A549 (cell line): ENCODE measurements at regions of chr11 and their contacts with region 1.

Region 1: DNA sequence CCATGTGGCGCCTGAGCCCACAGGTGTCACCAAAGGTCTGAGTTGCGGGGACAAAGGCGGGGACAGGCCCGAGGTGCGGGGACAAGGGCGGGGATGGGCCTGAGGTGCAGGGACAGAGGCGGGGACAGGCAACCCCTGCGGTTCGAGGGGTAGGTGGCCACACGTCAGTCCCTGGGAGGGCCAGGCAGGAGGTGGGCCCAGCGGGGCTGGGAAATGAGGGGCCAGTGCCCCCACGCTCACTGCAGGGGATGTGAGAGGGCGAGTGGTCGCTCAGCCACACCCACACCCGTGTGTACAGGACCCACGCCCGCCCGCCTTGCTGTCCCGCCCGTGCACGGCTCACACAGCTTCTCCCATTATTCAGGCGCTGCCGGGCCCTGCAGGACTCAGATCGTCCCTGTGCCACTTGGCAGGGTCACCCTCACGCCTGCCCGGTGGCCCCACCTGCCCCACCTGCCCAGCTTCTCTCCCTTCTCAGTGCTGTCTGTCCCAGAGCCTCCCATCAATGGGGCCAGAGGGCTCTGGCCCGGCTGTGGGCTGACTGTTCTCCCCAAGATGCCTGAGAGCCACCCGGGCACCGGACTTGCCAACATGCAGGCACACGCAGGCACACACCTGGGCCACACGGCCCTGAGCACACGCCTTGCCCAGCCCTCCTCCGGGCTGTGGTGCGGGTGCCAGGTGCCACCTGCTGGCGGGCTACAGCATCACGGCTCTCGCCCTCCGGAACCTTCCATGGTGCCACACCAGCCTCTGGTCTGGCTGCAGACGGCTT is 14.2 kb upstream of the MUC6 start:
- DNase-seq: peak; percentile 79 to 93
- ATAC-seq: peak; percentile 86 to 96
- H3K4me3 ChIP-seq: no peak overlapping the region
- H3K27ac ChIP-seq: peak overlapping the region; percentile 30 to 81; a peak in 5 of 6 replicates
- H3K4me1 ChIP-seq: peaks cover 42% of the 10 kb centered on the region
- CTCF ChIP-seq: peak; percentile 94
- EP300 ChIP-seq: no peak
- POLR2A ChIP-seq: no peak
- RAD21 ChIP-seq: peak; percentile 97 to 98

Region 2: GRCh38 chr11:848380-848931 is 202.3 kb before region 1 on chr11:
- CTCF ChIA-PET with region 1: interaction called, 40 read pairs
- POLR2A ChIA-PET with region 1: no interaction called
- DNase-seq: peak in 1 of 2 experiments; percentile 72
- ATAC-seq: peak in 1 of 2 experiments; percentile 9; a peak in 2 of 6 replicates
- H3K4me3 ChIP-seq: no peak overlapping the region
- H3K27ac ChIP-seq: peak overlapping the region; percentile 37 to 99; a peak in 3 of 6 replicates
- H3K4me1 ChIP-seq: peaks cover 67% of the 10 kb centered on the region
- CTCF ChIP-seq: peak; percentile 64
- EP300 ChIP-seq: no peak
- POLR2A ChIP-seq: no peak
- RAD21 ChIP-seq: peak; percentile 72 to 78

Region 3: GRCh38 chr11:870127-870413 is 180.7 kb before region 1 on chr11:
- CTCF ChIA-PET with region 1: interaction called, 25 read pairs
- POLR2A ChIA-PET with region 1: no interaction called
- DNase-seq: no peak
- ATAC-seq: peak; percentile 35 to 48; a peak in 5 of 6 replicates
- H3K4me3 ChIP-seq: no peak overlapping the region
- H3K27ac ChIP-seq: no peak overlapping the region
- H3K4me1 ChIP-seq: peaks cover 24% of the 10 kb centered on the region; the same call in 2 of the 3 replicates
- CTCF ChIP-seq: no peak; the same call in 1 of the 3 replicates
- EP300 ChIP-seq: no peak
- POLR2A ChIP-seq: no peak
- RAD21 ChIP-seq: no peak

Region 4: GRCh38 chr11:888310-889212 is 162.2 kb before region 1 on chr11:
- CTCF ChIA-PET with region 1: interaction called, 11 read pairs
- POLR2A ChIA-PET with region 1: no interaction called
- DNase-seq: no peak
- ATAC-seq: no peak
- H3K4me3 ChIP-seq: no peak overlapping the region
- H3K27ac ChIP-seq: no peak overlapping the region
- H3K4me1 ChIP-seq: no peaks in the 10 kb centered on the region
- CTCF ChIP-seq: no peak
- EP300 ChIP-seq: no peak
- POLR2A ChIP-seq: no peak
- RAD21 ChIP-seq: no peak

Region 5: DNA sequence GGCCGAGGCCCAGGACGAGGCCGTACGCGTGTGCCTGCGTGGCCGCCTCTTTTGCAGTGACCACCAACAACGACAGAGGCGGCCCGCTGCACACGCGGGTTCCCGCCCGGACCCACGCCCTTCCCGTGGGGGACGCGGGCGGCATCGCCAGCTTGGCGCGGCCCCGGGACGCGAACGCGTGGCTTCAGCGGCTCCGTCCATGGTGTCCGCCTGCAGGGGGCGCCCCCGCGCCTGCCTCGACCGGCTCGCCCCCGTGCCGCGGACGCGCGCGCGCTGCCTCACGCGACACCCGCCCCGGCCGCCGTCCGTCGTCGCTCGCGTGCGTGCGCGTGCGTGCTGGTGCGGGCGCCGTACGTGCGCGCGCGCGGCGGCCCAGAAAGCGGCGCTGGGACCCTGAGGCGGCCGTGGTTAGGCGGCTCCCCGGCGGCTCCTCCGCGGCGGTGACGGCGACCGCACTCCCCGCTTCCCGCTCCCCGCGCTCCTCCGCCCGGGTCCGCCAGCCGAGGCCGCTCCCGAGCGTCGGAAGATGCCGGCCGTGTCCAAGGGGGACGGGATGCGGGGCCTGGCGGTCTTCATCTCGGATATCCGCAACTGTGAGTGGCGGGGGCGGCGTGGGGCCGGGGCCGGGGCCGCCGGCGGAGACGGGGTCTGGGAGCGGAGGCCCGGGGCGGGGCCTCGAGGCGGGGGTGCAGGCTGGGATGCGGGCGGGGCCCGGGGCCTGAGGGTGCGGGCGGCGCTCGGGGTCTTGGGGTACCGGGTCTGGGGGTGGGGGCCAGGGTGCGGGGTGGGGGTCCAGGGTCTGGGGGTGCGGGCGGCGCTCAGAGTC is 125.1 kb before region 1 on chr11 and contains the start of gene AP2A2:
- CTCF ChIA-PET with region 1: interaction called, 19 read pairs
- POLR2A ChIA-PET with region 1: no interaction called
- DNase-seq: peak; percentile 84 to 90
- ATAC-seq: peak; percentile 67 to 81
- H3K4me3 ChIP-seq: peak within 1 kb of the TSS; percentile 96
- H3K27ac ChIP-seq: peak within 1 kb of the TSS; percentile 98 to 99
- H3K4me1 ChIP-seq: peaks cover 13% of the 10 kb centered on the region
- CTCF ChIP-seq: peak; percentile 97
- EP300 ChIP-seq: no peak
- POLR2A ChIP-seq: peak; percentile 84
- RAD21 ChIP-seq: peak in 1 of 2 experiments; percentile 76; a peak in 4 of 5 replicates
- polyA plus RNA-seq, gene AP2A2: 60.4 and 72.6 TPM in 2 replicates

Region 6: DNA sequence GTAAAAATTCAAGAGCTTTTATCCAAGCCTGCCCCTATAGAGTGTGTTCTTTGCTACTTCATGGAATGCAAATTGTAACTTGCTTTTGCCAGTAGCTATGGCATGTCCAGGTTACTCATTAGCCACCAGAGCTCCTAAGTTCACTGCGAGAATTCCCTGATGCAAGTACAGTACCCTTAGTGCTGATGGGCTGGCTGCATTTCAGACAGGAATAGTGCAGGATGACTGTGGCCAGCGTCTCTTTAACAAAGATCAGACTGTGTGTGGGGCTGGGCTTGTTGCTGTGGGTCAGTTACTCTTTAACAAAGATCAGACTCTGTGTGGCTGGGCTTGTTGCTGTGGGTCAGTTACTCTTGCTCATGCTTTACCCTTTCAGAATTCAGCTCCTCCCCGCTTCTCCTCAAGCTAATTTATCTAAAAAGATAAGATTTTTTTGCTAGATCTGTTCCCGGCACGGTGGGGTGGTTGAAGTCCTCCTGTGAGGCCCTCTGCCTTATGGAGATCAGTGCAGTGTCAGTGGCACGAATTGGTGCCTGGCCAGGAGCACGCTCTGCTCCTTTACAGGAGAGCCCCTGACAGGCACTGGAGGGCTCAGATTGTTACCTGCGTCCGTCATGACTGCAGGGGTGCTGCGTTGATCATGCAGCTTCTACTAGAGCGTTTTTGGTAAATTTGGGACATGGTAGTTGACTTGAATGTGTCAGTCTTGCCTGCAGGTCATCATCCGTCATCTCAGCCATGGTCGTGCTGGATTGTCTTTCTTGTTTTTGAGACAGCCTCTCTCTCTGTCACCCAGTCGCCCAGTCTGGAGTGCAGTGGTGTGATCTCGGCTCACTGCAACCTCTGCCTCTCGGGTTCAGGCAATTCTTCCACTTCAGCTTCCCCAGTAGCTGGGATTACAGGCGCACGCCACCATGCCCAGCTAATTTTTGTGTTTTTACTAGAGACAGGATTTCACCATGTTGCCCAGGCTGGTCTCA is 98.1 kb before region 1 on chr11:
- CTCF ChIA-PET with region 1: interaction called, 16 read pairs
- POLR2A ChIA-PET with region 1: no interaction called
- DNase-seq: peak; percentile 85 to 96
- ATAC-seq: peak; percentile 97 to 98
- H3K4me3 ChIP-seq: peak overlapping the region; percentile 8; the same call in 1 of the 3 replicates
- H3K27ac ChIP-seq: peak overlapping the region; percentile 77 to 93
- H3K4me1 ChIP-seq: peaks cover 54% of the 10 kb centered on the region
- CTCF ChIP-seq: no peak
- EP300 ChIP-seq: no peak; a peak in 1 of 5 replicates
- POLR2A ChIP-seq: no peak
- RAD21 ChIP-seq: 0 out of 5 replicates have a peak, but pooled peaks of 1 of the 2 experiments have one; percentile 18

Region 7: DNA sequence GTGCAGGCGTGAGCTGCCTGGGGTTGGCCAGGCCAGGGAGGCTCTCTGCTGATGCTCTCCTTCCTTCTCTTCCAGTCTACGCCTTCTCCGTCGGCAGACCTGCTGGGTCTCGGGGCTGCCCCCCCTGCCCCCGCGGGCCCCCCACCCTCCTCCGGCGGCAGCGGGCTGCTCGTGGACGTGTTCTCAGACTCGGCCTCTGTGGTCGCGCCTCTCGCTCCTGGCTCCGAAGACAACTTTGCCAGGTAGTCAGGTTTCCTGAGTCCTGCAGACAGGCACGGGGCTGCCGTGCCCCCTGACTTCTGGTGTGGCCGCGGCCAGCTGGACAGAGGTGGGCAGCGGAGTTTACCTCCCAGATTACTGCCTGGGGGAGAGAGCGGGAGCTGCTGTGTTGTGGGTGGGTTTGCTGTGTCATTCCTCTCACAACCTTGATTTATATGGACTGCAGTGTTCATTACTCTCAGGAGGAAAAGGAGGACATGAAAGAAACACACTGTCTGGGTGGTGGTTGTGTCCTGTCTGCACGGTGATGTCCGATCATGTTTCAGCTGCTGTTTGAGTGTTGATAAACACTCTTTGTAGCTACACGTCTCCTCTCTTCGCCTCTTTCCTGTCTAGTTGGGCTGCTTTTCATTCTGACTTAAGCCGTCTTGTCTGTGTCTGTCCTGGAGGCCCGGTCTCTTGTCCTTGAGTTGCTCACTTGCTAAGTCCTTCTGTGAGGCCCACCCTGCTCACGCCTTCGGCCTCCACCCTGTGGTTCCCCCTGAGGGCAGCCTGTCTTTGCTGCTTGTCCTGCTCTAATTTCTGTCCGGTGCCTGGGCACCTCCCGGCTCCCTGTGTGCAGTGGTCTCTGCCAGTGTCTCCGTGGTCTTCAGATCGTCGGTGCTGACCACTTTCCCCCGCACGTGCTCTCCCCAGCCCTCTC is 50.1 kb before region 1 on chr11:
- CTCF ChIA-PET with region 1: no interaction called
- POLR2A ChIA-PET with region 1: no interaction called
- DNase-seq: no peak
- ATAC-seq: no peak
- H3K4me3 ChIP-seq: no peak overlapping the region
- H3K27ac ChIP-seq: 0 out of 6 replicates have a peak overlapping the region, but pooled peaks of 1 of the 2 experiments have one; percentile 7
- H3K4me1 ChIP-seq: no peaks in the 10 kb centered on the region
- CTCF ChIP-seq: no peak
- EP300 ChIP-seq: no peak
- POLR2A ChIP-seq: no peak
- RAD21 ChIP-seq: no peak

Region 8: DNA sequence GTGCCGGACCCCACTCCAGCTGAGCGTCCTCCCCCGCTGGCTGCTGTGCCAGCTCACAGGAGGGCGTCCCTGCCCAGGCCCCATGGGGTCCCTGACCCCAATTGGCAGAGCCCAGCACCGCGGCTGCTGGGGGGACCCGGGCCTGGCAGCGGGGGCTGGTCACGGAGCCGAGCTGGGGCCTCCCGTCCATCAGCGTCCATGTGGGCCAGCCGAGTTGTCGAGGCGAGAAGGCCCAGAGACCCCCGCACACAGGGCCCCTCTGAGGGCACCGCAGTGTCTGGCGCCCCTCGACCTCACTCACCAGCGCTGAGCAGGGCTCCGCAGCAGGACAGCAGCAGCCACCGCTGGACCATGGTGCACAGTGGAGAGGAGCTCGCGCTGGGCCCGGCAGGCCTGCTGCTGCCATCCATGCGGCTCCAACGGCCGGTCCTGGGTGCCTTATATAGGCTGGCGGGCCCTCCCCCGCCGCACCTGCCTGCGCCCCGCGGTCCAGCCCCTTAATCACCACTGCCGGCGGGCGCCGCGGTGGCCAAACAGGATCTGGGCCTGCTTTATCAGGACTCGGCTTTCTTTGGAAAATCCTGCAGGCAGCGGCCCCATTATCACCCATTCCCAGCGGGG is 14.4 kb before region 1 on chr11 and contains the start of gene MUC6:
- CTCF ChIA-PET with region 1: interaction called, 38 read pairs
- POLR2A ChIA-PET with region 1: no interaction called
- DNase-seq: no peak
- ATAC-seq: peak in 1 of 2 experiments; percentile 31; a peak in 3 of 6 replicates
- H3K4me3 ChIP-seq: no peak within 1 kb of the TSS
- H3K27ac ChIP-seq: no peak within 1 kb of the TSS
- H3K4me1 ChIP-seq: peaks cover 2% of the 10 kb centered on the region
- CTCF ChIP-seq: no peak
- EP300 ChIP-seq: no peak
- POLR2A ChIP-seq: no peak
- RAD21 ChIP-seq: no peak
- polyA plus RNA-seq, gene MUC6: not detected in 2 replicates